AG04450 (cell line): ENCODE measurements at regions of chr3 and their contacts with region 1.

Region 1: DNA sequence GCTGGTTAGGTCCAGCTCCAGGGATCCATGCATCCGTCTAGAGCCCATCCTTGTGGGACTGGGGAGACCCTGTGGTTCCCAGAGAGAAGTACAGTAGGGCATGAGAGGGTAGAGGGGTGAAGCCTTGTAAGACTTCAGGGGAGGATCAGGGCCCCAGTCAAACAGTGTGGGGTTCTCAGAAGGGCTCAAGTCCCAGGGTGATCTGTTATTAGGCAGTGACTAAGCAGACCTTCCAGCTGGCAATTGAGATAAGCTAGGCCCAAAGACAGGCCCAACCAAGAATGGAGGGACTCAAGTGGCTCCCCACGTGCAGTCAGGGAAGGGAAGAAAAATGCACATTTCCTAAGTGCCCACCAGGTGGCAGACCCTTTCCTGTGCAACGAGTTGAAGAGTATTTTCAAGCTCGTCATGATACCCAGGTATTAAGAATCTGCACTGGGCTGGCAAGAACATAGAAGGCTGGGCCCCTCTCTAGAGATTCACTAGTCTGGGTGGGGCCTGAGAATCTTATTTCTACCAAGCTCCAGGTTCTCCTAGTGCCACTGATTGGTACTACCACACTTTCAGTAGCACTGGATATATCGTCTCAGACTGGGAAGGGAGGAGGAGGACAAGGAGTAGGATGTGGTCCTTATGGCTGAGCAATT is 240.8 kb downstream of the NR1D2 start:
- DNase-seq: peak; percentile 26
- H3K4me3 ChIP-seq: no peak overlapping the region
- H3K27ac ChIP-seq: no peak overlapping the region
- H3K27me3 ChIP-seq: no peaks in the 10 kb centered on the region
- CTCF ChIP-seq: peak; percentile 71

Region 2: DNA sequence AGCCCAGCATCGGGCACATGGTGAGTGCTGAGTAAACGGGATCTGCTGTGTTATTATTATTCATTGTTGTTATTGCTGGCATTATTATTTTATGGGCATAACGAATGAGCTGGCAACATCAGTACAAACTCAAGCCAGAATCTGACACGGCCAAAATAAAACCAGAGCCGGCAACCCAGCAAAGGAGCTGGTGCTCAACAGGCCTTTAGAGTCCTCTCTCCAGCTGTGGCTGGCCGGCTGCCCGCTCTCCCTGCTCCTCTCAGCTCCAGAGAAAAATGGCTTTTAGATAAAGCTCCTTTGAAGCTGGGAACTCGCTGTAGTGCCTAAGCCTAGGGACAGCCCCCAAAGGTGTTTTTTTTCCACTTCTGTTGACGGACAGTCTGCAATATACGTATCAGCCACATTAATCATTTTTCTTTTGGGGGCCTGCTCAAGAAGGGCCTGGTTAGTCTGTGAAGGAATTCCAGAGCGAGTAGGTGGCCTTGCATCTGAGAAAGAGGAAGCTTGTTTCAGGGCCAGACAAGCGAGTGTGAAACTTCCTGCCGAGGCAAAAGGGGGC is 574.0 kb before region 1 on chr3:
- CTCF ChIA-PET with region 1: no interaction called
- POLR2A ChIA-PET with region 1: no interaction called
- DNase-seq: peak; percentile 29
- H3K4me3 ChIP-seq: no peak overlapping the region
- H3K27ac ChIP-seq: peak overlapping the region; percentile 92
- H3K27me3 ChIP-seq: no peaks in the 10 kb centered on the region
- CTCF ChIP-seq: no peak

Region 3: DNA sequence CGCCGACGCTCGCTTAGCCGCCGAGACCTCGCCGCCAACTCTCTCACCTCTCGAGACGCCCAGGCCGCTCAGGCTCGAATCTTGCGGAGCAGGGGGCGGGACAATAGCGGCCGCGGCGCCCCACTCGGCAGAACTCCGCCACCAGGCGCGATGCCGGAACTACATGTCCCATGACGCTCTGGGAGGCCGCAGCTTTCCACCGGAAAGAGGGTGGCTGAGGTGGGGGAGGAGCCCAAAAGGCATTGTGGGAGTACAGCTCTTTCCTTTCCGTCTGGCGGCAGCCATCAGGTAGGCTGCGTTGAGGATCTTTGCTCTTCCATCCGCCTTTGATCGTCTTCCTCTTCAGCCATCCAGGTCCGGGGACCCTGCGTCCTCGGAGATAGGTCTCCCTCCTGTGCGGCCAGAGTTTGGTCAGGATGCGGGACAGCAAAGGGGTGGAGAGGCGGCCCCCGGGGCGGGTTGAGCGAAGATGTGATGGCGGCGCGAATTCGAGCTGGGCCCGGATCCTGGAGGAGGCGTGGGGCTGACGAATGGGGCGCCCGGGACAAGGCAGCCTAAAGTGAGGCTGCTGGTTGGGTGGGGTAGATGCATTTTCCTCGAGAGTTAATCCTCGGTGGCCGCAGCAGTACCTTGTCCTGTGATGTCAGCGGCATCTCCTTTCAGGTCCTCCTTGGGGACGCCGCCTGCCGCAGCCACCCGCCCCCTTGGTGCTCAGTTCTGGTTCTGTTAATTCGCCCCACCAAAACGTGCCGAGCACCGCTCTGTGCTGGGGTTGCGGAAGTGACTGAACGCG is 268.8 kb before region 1 on chr3 and contains the starts of genes NKIRAS1 and RPL15:
- CTCF ChIA-PET with region 1: no interaction called
- POLR2A ChIA-PET with region 1: no interaction called
- DNase-seq: peak; percentile 91
- H3K4me3 ChIP-seq: peak within 1 kb of the TSS; percentile 98
- H3K27ac ChIP-seq: peak within 1 kb of the TSS; percentile 75
- H3K27me3 ChIP-seq: no peaks in the 10 kb centered on the region
- CTCF ChIP-seq: peak; percentile 60
- polyA plus RNA-seq, gene NKIRAS1: 6.5 and 10.4 TPM in 2 replicates
- polyA plus RNA-seq, gene RPL15: 3,614 and 3,910 TPM in 2 replicates

Region 4: DNA sequence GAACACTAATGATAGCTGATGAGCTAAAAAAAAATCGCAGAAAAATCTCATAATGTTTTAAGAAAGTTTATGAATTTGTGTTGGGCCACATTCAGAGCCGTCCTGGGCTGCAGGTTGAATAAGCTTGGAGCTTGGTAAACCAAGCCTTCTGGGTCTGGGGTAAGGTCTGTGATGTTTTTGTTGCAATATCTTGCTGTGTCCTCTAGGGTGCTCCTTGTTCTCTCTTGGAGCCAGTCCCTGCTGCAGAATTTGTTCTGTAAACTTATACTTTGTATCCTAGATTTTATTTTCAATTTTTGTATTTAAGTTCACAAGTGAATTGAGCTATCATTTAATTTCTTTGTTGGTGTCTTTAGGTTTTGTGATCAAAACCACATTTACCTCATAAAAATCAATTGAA is 97.1 kb before region 1 on chr3:
- CTCF ChIA-PET with region 1: interaction called, 11 read pairs
- POLR2A ChIA-PET with region 1: no interaction called
- DNase-seq: no peak
- H3K4me3 ChIP-seq: no peak overlapping the region
- H3K27ac ChIP-seq: no peak overlapping the region
- H3K27me3 ChIP-seq: peaks cover 3% of the 10 kb centered on the region
- CTCF ChIP-seq: peak; percentile 52

Region 5: GRCh38 chr3:24197811-24198210 is 11.9 kb after region 1 on chr3:
- CTCF ChIA-PET with region 1: interaction called, 10 read pairs
- POLR2A ChIA-PET with region 1: no interaction called
- DNase-seq: no peak
- H3K4me3 ChIP-seq: no peak overlapping the region
- H3K27ac ChIP-seq: no peak overlapping the region
- H3K27me3 ChIP-seq: no peaks in the 10 kb centered on the region
- CTCF ChIP-seq: no peak

Region 6: DNA sequence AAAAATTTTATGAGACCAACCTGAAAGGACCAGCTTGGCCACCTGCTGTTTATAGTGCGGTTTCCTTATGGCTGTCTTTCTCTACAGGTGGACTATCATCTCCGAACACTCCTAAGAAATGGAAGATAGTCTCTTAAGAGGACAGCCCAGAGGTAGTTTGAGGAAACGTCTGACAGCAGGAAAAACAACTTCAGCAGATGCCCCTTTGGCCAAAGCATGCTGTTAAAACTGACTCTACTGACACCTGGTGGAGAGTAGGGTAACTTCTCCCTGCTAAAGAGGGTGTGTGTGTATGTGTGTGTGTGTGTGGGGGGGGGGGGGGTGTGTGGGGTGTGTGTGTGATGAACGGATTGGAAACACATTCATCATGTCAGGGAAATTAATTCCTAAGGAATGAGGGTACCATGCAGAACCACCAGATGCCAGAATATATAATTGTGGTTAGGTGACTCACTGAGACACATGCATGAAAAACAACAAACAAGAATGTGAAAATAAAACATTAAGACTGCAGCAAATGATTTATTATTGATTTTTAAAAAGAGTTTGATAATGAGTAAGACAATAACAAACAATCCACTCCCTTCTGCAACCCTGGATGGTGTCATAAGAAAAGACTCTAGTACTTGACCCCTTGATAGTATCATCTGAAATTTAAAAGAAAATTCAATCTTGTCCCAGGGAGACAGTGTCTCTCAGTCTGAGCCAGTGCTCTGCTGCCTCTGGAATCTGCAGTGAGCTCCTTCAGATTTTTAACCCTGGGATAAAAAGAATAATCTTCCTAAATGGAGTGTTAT is 52.3 kb after region 1 on chr3:
- CTCF ChIA-PET with region 1: interaction called, 17 read pairs
- POLR2A ChIA-PET with region 1: no interaction called
- DNase-seq: peak; percentile 76
- H3K4me3 ChIP-seq: no peak overlapping the region
- H3K27ac ChIP-seq: no peak overlapping the region
- H3K27me3 ChIP-seq: peaks cover 9% of the 10 kb centered on the region
- CTCF ChIP-seq: peak; percentile 87